ENCODE measurements at regions of chr2 and their contacts with region 1.

Region 1: GRCh38 chr2:60317844-60318243 is 235.6 kb downstream of the BCL11A start:
- DNase-seq: peak; percentile 92
- H3K4me3 ChIP-seq: peak overlapping the region; percentile 47
- H3K27ac ChIP-seq: peak overlapping the region; percentile 92
- H3K4me1 ChIP-seq: peaks cover 86% of the 10 kb centered on the region
- CTCF ChIP-seq: no peak

Region 2: DNA sequence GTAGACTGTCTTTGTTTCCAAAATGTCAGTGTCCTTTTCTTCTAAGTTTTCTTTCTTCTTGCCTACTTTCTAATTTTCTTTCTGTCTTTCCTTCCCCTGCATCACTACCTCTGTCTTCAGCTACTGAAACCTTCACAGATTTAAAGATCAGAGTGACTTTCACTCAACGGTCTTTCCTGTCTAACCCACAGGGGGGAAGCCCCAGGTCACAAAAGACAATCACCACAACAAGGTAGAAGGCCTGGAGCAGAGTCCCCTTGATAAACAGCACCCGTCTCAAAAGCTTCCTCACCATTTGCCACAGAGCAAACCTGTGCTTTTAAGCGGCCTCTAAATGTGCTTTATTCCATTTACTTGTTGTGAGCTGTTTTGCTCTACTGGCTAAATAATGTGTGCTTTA is 429.8 kb before region 1 on chr2:
- CTCF ChIA-PET with region 1: no interaction called
- POLR2A ChIA-PET with region 1: no interaction called
- intact Hi-C with region 1: loop called (anchors 10 kb)
- DNase-seq: peak; percentile 85
- H3K4me3 ChIP-seq: no peak overlapping the region
- H3K27ac ChIP-seq: peak overlapping the region; percentile 51
- H3K4me1 ChIP-seq: peaks cover 25% of the 10 kb centered on the region
- CTCF ChIP-seq: peak; percentile 59

Region 3: DNA sequence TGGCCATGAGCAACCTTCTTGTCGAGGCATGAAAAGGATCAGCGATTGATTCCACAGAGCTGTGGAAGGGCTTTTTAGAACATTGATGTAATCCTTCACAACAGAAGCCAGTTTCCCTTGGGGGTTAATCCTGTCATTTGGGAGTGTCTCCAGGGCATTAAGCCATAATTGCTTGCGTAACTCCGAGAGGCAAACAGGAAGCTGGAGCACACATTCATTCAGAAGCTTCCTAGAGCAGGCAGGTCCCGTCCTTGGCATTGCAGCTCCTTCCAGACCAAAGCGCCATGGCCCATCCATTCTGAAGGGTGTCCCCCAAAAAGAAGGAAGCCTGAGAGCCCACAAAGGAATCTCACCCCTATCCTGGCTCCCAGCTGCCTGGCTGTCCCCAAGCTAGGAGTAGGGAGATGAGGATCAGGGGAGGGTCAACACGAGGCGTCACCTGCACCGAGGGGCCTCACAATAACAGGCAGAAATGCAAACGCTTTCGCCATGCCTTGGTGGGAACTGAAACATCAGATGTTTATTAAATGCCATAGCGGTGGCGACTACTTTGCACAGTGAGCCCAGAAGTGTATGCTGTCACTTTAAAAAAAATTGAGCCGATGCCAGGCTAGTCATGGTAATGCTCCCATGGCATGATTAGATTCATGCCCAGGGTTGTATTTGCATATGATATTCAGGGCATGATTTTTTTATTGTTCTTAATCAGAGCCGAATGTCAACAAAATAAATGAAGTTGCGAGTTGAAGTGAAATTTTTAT is 103.8 kb before region 1 on chr2:
- CTCF ChIA-PET with region 1: no interaction called
- POLR2A ChIA-PET with region 1: no interaction called
- intact Hi-C with region 1: no loop called
- DNase-seq: no peak
- H3K4me3 ChIP-seq: no peak overlapping the region
- H3K27ac ChIP-seq: no peak overlapping the region
- H3K4me1 ChIP-seq: no peaks in the 10 kb centered on the region
- CTCF ChIP-seq: no peak

Region 4: DNA sequence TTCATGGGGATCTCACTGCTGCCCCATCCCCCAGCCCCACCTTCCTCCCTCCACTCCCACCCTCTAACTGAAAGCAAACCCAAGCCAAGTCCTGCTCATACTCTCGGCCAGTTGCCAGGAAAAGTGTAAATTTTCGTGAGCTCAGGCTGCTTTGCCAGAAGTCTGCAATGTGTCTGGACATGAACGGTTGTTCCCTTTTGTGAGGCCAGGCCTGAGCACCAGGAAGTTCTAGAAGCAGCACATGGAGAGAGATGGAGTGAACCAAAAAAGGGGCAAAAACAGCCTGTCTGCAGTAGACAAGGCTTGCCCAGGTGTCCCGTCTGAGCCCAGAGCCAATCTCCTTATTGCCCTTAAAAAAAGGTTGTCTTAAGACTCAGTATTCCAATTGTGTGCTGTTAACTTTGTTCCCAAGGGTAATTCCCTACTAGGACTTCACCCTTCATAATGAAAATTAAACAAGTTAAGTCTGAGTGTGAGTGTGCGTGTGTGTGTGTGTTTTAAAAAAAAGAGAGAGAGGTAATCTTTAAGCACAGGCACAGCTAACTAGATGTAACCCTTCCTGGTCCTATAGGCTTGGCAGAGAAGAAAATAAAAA is 11.5 kb before region 1 on chr2:
- CTCF ChIA-PET with region 1: interaction called, 11 read pairs
- POLR2A ChIA-PET with region 1: interaction called, 28 read pairs
- intact Hi-C with region 1: no loop called
- DNase-seq: no peak
- H3K4me3 ChIP-seq: no peak overlapping the region
- H3K27ac ChIP-seq: peak overlapping the region; percentile 2
- H3K4me1 ChIP-seq: peaks cover 88% of the 10 kb centered on the region
- CTCF ChIP-seq: no peak

Region 5: DNA sequence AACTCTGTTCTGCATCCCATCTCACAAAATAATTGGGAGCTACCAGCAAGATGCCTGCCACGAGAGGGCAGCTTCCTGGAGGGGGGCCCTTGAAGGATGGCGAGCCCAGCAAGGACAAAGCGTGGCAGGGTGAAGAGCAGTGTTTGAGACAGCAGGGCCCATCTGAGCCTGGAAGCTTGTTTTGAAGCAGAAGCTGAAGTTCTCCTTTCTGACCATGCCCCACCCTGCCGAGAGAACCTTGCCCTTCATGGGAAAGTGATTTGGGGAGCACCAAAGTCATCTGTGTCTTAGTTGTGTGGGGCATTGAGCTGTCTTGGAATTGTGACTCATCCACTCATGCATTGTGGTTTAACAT is 19.3 kb after region 1 on chr2:
- CTCF ChIA-PET with region 1: no interaction called
- POLR2A ChIA-PET with region 1: interaction called, 20 read pairs
- intact Hi-C with region 1: no loop called
- DNase-seq: peak; percentile 54
- H3K4me3 ChIP-seq: no peak overlapping the region
- H3K27ac ChIP-seq: peak overlapping the region; percentile 64
- H3K4me1 ChIP-seq: peaks cover 24% of the 10 kb centered on the region
- CTCF ChIP-seq: peak; percentile 51

Region 6: GRCh38 chr2:61356261-61356957 is 1038.6 kb after region 1 on chr2:
- CTCF ChIA-PET with region 1: no interaction called
- POLR2A ChIA-PET with region 1: no interaction called
- intact Hi-C with region 1: no loop called
- DNase-seq: no peak
- H3K4me3 ChIP-seq: no peak overlapping the region
- H3K27ac ChIP-seq: no peak overlapping the region
- H3K4me1 ChIP-seq: no peaks in the 10 kb centered on the region
- CTCF ChIP-seq: no peak